Sigmoid colon (tissue), 7 donors: ENCODE measurements at regions of chr2 and their contacts with region 1.

Region 1: GRCh38 chr2:223469270-223470046 is 132.7 kb downstream of the SCG2 start:
- DNase-seq: peak; percentile 78
- H3K4me3 ChIP-seq: no peak overlapping the region
- H3K27ac ChIP-seq: peak overlapping the region in 2 of 4 donors; percentile 29 to 57
- H3K4me1 ChIP-seq: peaks cover 0 to 32% (median 25%) of the 10 kb centered on the region in 4 donors
- H3K27me3 ChIP-seq: no peaks in the 10 kb centered on the region
- CTCF ChIP-seq: no peak
- EP300 ChIP-seq: no peak
- POLR2A ChIP-seq: no peak

Region 2: DNA sequence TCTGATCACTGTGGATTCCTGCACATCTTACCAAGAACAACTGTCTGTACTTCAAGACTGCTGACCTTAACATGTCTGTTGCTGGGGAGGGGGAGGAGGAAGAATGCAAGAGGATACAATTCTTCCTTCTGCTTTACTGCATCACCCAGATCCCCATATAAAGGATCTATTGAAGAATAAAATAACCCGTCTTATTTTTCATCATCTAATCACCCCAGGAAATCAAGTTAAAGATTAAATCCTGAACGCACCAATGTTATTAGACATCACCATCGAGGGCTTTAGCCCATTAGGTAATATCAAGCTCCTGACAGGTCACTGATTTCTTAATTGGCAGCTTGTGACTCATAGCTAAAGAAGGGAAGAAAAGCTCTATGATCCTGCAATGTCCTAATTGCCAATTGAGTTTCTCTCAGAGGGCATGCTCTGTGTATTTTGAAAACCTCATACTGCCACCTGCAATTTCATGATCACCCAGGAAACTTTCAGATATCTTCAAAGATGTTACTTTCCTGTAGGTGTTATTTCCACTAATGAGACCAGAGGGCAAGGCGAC is 492.9 kb before region 1 on chr2:
- intact Hi-C with region 1: loop called (anchors 10 kb)
- DNase-seq: no peak
- H3K4me3 ChIP-seq: no peak overlapping the region
- H3K27ac ChIP-seq: no peak overlapping the region
- H3K4me1 ChIP-seq: peaks cover 0 to 5% (median 0%) of the 10 kb centered on the region in 4 donors
- H3K27me3 ChIP-seq: no peaks in the 10 kb centered on the region
- CTCF ChIP-seq: no peak
- EP300 ChIP-seq: no peak
- POLR2A ChIP-seq: no peak

Region 3: DNA sequence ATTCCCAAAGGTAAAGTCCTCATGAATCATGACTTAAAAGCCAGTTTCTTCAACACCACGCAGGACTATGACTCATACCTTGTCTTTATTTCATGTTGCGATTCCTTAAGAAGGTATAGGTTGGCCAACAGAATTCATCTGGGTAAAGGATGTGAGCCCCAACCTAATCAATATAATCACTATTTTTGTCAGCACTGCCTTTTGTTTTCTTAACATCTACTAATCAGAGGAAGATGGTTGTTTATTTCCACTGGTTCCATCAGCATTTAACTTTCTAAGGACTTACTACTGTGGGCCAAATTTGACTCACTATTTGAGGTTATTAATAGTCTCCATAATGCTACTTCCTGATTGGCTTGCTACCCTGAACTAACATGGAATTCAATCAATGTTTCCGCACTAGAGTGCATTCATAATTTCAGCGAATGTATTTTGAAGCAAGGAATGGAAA is 54.1 kb after region 1 on chr2:
- intact Hi-C with region 1: no loop called
- DNase-seq: no peak
- H3K4me3 ChIP-seq: no peak overlapping the region
- H3K27ac ChIP-seq: no peak overlapping the region
- H3K4me1 ChIP-seq: no peaks in the 10 kb centered on the region
- H3K27me3 ChIP-seq: no peaks in the 10 kb centered on the region
- CTCF ChIP-seq: no peak
- EP300 ChIP-seq: no peak
- POLR2A ChIP-seq: no peak